K562 (cell line): ENCODE measurements at regions of chr2 and their contacts with region 1.

Region 1: GRCh38 chr2:61176755-61177726 is 15.1 kb downstream of the C2orf74 start:
- DNase-seq: peak; percentile 95 to 98 (median 98)
- ATAC-seq: peak; percentile 90
- H3K4me3 ChIP-seq: peak overlapping the region; percentile 68
- H3K27ac ChIP-seq: peak overlapping the region; percentile 88
- H3K4me1 ChIP-seq: peaks cover 30 to 46% of the 10 kb centered on the region in 2 experiments
- H3K27me3 ChIP-seq: no peaks in the 10 kb centered on the region
- CTCF ChIP-seq: peak in 2 of 3 experiments; percentile 21 to 22; a peak in 3 of 6 replicates
- EP300 ChIP-seq: peak; percentile 1; the same call in 1 of the 2 replicates
- POLR2A ChIP-seq: peak; percentile 95
- RAD21 ChIP-seq: peak in 1 of 2 experiments; percentile 28; a peak in 3 of 4 replicates

Region 2: DNA sequence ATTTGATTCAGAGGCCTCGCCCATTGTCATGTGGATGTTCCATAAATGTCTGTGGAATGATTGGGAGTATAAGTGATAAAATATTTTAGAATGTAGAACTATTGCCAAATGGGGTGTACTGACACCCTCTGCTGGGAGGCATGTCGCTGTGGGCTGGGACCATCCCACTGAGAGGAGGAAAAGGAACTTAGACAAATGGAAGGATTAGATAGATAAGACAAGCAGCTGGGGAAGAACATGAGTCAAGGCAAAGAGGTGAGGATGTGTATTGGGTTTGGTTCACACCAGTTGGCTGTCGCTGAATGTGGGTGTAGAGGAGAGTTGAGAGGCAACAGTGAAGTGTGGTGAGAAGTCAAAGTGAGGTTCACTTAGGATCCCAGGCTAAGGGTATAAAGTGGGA is 11.1 kb before region 1 on chr2:
- CTCF ChIA-PET with region 1: no interaction called
- POLR2A ChIA-PET with region 1: interaction called, 28 read pairs
- in situ Hi-C with region 1: no loop called
- intact Hi-C with region 1: no loop called
- DNase-seq: peak; percentile 29 to 59 (median 42)
- ATAC-seq: peak; percentile 82
- H3K4me3 ChIP-seq: no peak overlapping the region
- H3K27ac ChIP-seq: no peak overlapping the region
- H3K4me1 ChIP-seq: peaks cover 0 to 6% of the 10 kb centered on the region in 2 experiments; a peak in 3 of 5 replicates
- H3K27me3 ChIP-seq: no peaks in the 10 kb centered on the region
- CTCF ChIP-seq: peak in 2 of 3 experiments; percentile 12 to 43; a peak in 2 of 6 replicates
- EP300 ChIP-seq: no peak
- POLR2A ChIP-seq: no peak
- RAD21 ChIP-seq: peak in 1 of 2 experiments; percentile 31; a peak in 2 of 4 replicates

Region 3: DNA sequence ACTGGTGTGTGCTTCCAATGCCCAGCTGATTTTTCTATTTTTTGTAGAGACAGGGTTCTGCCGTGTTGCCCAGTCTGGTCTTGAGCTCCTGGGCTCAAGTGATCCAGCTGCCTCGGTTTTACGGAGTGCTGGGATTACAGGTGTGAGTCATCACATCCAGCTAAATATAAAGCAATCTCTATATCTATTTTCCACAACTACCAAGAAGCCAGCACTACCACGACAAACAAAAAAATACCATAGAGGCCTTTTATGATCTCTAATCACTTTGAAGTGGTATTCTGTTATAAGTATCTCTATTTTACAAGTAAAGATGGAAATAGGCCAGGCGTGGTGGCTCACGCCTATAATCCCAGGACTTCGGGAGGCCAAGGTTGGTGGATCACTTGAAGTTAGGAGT is 19.6 kb after region 1 on chr2:
- CTCF ChIA-PET with region 1: no interaction called
- POLR2A ChIA-PET with region 1: interaction called, 19 read pairs
- in situ Hi-C with region 1: no loop called
- intact Hi-C with region 1: no loop called
- DNase-seq: no peak
- ATAC-seq: no peak
- H3K4me3 ChIP-seq: no peak overlapping the region
- H3K27ac ChIP-seq: no peak overlapping the region
- H3K4me1 ChIP-seq: no peaks in the 10 kb centered on the region
- H3K27me3 ChIP-seq: no peaks in the 10 kb centered on the region
- CTCF ChIP-seq: no peak
- EP300 ChIP-seq: no peak
- POLR2A ChIP-seq: no peak
- RAD21 ChIP-seq: no peak